BJ (cell line): ENCODE measurements at regions of chr1 and their contacts with region 1.

Region 1: DNA sequence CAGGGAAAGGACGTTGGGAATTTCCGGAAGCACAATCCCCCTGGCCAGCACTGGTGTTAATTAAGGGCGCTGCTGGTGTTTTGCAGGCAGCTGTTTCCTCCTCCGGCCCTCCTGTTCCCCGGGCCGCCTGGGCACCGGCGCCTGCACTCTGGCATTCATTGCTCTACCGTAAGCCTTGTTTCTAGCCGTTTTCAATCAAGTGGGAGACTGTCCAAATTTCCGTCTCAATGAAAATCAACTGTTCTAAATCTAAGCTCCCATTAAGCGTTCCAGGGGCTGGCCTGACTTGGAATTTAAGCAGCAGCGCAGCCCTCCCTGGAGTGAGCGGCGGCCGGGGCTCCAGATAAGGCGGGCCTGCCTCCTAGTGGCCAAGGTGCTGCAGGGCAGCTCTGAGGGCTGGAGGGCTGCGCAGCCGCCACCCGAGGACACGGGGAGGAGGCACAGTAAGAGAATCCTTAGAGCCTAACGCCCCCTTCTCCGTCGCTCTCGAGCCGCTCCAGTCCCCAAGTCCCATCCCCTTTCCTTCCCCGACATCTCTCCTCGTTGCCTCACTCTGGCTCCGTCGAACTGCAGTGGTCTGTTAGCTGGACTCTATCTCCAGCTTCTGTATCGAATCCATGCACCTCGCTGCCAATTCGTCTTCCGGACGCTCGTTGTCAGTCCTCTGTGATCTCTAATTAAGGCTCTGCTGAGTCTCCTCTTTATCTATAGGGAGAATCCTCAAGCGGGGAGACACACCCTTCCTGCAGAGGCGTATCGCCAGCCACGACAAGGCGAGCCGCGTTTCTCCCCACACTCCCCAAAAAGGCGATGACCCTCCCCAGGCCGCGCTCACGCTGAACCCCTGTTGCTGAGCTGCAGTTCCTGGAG is 57.8 kb upstream of the LRRC8D start:
- DNase-seq: peak; percentile 20
- H3K4me3 ChIP-seq: peak overlapping the region; percentile 51
- H3K27me3 ChIP-seq: no peaks in the 10 kb centered on the region
- CTCF ChIP-seq: peak; percentile 100

Region 2: DNA sequence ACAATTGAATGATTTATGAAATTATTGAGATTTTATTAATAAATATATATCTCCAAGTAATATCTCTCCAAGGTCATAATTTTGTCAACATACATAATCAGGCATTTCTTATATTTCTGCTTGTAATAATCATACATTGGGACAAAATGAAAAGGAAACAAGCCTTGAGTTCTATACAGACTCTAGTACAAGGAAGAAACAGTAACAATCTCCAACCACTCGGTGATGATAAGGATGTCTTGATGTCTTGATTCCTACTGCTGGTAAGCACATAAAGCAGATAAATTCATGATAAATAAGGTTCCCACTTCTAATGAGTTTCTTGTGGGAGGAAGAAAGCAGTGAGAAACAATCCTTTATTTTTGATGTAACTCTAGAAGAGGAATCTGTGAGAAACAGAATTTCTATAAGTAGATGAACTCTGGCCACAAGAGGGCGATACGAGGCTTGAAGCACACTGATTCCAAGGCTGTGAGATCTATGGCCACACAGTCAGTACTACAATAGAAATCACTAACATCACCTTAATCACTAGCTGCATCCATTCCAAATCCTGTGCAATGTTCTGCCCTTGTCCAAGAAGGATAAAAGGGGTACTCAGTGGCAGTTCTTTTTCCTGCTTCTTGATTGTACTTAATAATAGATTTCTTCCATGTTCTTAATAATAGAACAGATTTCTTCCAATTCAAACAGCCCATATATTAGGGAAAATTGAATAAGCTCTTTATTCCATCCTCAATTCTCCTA is 279.8 kb before region 1 on chr1:
- CTCF ChIA-PET with region 1: interaction called, 110 read pairs
- POLR2A ChIA-PET with region 1: no interaction called
- DNase-seq: peak; percentile 5
- H3K4me3 ChIP-seq: no peak overlapping the region
- H3K27me3 ChIP-seq: peaks cover 2% of the 10 kb centered on the region; the same call in 1 of the 2 replicates
- CTCF ChIP-seq: peak; percentile 74

Region 3: GRCh38 chr1:89605692-89606091 is 157.3 kb before region 1 on chr1:
- CTCF ChIA-PET with region 1: interaction called, 35 read pairs
- POLR2A ChIA-PET with region 1: no interaction called
- DNase-seq: no peak
- H3K4me3 ChIP-seq: no peak overlapping the region
- H3K27me3 ChIP-seq: no peaks in the 10 kb centered on the region
- CTCF ChIP-seq: no peak

Region 4: DNA sequence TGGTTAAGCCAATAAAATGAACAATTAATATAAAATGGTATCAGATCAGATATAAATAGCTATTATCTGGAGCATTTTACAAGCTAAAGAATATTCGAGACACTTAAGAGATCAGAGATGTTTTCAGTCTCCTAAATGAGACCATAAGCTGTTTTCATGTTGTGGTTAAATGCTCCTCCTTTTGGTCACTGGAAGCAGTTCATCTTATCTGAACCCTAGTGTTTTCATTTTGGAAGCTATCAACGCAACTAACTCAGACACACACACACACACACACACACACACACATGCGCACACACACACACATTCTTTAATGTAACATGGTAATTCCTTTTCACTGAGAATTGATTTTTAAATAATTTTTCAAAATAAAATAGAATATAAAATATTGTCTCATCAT is 140.1 kb before region 1 on chr1:
- CTCF ChIA-PET with region 1: interaction called, 27 read pairs
- POLR2A ChIA-PET with region 1: no interaction called
- DNase-seq: no peak
- H3K4me3 ChIP-seq: no peak overlapping the region
- H3K27me3 ChIP-seq: no peaks in the 10 kb centered on the region
- CTCF ChIP-seq: 0 out of 2 replicates have a peak, but pooled peaks have one; percentile 9

Region 5: DNA sequence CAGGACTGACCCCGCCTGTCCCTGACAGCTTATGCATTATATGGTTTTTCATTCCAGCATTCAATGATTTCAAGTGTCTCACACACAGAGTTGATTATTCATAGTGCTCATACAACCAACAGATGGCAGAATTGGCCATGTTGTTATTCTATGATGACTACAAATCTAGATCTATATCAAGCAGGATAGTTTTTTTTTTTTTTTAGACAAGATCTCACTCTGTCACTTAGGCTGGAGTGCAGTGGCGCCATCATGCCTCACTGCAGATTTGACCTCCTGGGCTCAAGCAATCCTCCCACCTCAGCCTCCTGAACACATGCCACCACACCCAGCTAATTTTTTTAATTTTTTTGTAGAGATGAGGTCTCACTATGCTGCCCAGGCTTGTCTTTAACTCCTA is 17.7 kb after region 1 on chr1:
- CTCF ChIA-PET with region 1: interaction called, 14 read pairs
- POLR2A ChIA-PET with region 1: no interaction called
- DNase-seq: peak; percentile 21
- H3K4me3 ChIP-seq: no peak overlapping the region
- H3K27me3 ChIP-seq: no peaks in the 10 kb centered on the region
- CTCF ChIP-seq: peak; percentile 50